BJ (cell line): ENCODE measurements at regions of chr7 and their contacts with region 1.

Region 1: GRCh38 chr7:19708397-19709248 is at the start of gene POLR1F:
- DNase-seq: peak; percentile 71
- H3K4me3 ChIP-seq: peak within 1 kb of the TSS; percentile 89
- H3K27me3 ChIP-seq: no peaks in the 10 kb centered on the region; the same call in 1 of the 2 replicates
- CTCF ChIP-seq: peak; percentile 95
- polyA plus RNA-seq, gene POLR1F: 5.1 and 14.0 TPM in 2 replicates

Region 2: GRCh38 chr7:19698331-19698730 is 10.3 kb before region 1 on chr7:
- CTCF ChIA-PET with region 1: interaction called, 20 read pairs
- POLR2A ChIA-PET with region 1: no interaction called
- DNase-seq: no peak
- H3K4me3 ChIP-seq: no peak overlapping the region
- H3K27me3 ChIP-seq: no peaks in the 10 kb centered on the region
- CTCF ChIP-seq: no peak